GM12878 (cell line): ENCODE measurements at regions of chr10 and their contacts with region 1.

Region 1: DNA sequence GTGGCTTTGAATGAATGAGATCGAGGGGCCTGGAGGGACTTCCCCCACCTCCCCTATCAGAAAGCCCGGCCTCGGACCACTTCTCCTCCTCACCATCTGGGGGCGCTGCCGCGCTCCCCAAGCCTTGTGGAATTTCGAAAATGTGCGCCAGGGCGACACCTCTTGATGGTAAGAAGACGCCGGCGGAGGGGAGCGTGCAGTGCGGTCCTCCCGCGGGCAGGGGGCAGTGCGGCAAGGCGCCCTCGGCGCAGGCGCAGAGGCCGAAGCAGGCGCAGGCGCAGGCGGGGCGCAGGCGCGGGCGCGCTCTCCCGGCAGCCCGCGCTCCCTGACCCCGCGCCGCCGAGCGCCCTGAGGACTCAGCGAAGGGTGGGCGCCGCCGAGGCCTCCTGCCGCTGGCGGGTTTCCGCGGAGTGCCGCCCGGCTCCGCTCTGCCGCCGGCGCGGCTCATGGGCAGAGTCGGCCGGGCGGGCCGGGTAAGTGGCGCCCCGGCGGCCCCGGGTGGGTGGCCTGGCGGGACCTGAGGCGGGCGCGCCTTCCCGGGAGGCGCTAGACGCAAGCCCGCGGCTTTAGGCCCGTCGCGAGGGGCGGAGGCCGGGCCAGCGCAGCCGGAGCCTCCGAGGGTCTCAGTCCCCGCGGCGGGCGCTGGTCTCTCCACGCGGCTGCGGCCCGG is at the start of gene RBM17:
- DNase-seq: peak; percentile 82
- ATAC-seq: peak; percentile 88
- H3K4me3 ChIP-seq: peak within 1 kb of the TSS; percentile 99
- H3K27ac ChIP-seq: peak within 1 kb of the TSS; percentile 81
- H3K4me1 ChIP-seq: peaks cover 3% of the 10 kb centered on the region; the same call in 1 of the 2 replicates
- H3K27me3 ChIP-seq: no peaks in the 10 kb centered on the region
- CTCF ChIP-seq: peak; percentile 100; a peak in 5 of 6 replicates
- EP300 ChIP-seq: no peak; a peak in 1 of 4 replicates
- POLR2A ChIP-seq: peak; percentile 85
- RAD21 ChIP-seq: peak; percentile 95
- polyA plus RNA-seq, gene RBM17: 28.4 to 45.0 TPM

Region 2: DNA sequence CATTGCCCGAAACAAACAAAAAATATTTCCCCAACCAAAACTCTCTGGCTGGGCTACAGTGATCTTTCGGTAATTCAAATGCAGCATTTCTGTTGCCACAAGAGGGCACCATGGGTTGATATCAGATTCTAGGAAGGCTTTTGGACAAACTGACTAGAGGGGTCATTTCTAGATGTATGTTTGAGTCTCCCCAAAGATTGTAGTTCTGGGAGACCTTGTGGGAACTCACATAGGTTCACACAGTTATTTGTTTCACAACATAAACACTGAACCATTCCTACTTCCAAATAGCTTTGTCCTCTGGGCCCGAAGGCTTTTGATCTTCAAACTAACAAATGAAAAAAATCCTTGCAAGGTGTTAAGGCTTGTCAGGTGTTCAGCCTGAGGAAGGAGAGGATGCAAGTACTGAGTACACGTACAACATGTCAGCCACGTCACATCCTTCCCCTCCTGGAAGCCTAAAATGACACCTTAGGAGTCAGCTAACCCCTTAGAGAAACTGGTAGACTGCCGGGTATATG is 74.6 kb before region 1 on chr10:
- CTCF ChIA-PET with region 1: interaction called, 142 read pairs
- POLR2A ChIA-PET with region 1: interaction called, 4 read pairs
- RAD21 ChIA-PET with region 1: interaction called, 45 read pairs
- SMC1A ChIA-PET with region 1: interaction called, 81 read pairs
- in situ Hi-C with region 1: loop called (anchors 5 kb)
- intact Hi-C with region 1: loop called (anchors 1 kb)
- DNase-seq: peak; percentile 30
- ATAC-seq: peak; percentile 91
- H3K4me3 ChIP-seq: no peak overlapping the region
- H3K27ac ChIP-seq: no peak overlapping the region
- H3K4me1 ChIP-seq: no peaks in the 10 kb centered on the region
- H3K27me3 ChIP-seq: no peaks in the 10 kb centered on the region; a peak in 1 of 4 replicates
- CTCF ChIP-seq: peak; percentile 68 to 82 (median 77)
- EP300 ChIP-seq: no peak
- POLR2A ChIP-seq: no peak
- RAD21 ChIP-seq: peak; percentile 89

Region 3: DNA sequence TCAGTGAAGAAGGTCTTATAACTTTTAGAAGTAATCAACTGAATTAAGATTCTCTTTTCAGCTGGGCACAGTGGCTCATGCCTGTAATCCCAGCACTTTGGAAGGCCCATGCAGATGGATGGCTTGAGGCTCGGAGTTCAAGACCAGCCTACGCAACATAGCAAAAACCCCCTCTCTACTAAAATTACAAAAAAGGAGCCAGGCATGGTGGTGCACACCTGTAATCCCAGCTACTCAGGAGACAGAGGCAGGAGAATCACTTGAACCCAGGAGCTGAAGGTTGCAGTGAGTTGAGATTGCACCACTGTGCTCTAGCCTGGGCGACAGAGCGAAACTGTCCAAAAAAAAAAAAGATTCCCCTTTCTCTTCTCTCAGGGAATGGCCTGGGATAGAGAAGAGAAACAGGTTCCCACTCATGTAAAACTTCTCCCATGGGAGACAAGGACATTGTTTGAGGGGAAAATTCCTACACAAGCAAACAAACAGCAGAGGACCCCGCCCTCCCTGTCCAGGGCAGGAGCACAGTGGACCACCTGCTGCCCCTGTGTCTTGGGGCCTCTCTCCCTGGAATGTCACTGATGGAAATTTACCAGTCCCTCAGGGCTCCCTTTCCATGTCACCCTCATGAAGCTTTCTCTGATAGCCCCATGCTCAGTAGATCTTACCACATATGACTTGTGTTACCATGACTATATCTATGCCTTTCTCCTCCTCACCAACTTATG is 32.3 kb before region 1 on chr10:
- CTCF ChIA-PET with region 1: interaction called, 95 read pairs
- POLR2A ChIA-PET with region 1: interaction called, 8 read pairs
- RAD21 ChIA-PET with region 1: interaction called, 21 read pairs
- SMC1A ChIA-PET with region 1: interaction called, 61 read pairs
- in situ Hi-C with region 1: no loop called
- intact Hi-C with region 1: loop called (anchors 1 kb)
- DNase-seq: no peak
- ATAC-seq: no peak
- H3K4me3 ChIP-seq: no peak overlapping the region
- H3K27ac ChIP-seq: no peak overlapping the region
- H3K4me1 ChIP-seq: peaks cover 57% of the 10 kb centered on the region
- H3K27me3 ChIP-seq: no peaks in the 10 kb centered on the region
- CTCF ChIP-seq: no peak
- EP300 ChIP-seq: no peak
- POLR2A ChIP-seq: no peak
- RAD21 ChIP-seq: no peak

Region 4: DNA sequence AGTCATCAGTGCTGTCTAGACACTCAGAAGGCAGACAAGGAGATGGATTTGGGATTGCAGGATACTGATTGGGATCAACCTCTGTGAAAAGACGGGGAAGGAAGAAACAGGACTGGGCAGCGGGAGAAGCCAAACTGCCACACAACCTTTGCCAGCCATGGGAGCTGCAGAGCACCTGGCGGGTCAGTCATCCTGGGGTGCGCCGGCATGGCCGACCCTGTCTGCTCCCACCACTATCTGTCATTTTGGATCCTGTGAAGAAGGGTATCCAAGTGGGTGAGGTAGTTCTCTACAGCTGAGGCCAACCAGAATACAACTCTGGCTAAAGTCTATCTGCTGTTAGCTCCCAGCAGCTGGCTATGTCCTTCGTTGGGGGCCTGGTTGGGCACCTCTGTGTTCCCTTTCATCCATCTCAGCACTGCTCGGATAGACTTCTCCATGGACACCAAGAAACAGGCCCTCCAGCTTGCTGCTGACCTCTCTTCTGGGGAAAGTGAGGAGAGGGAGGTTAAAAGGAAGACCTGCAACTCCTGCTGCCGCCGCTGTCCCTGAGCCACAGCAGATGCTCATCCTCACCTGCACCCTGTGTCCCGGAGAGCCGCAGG is 11.7 kb before region 1 on chr10:
- CTCF ChIA-PET with region 1: interaction called, 53 read pairs
- POLR2A ChIA-PET with region 1: interaction called, 3 read pairs
- RAD21 ChIA-PET with region 1: interaction called, 5 read pairs
- SMC1A ChIA-PET with region 1: interaction called, 14 read pairs
- in situ Hi-C with region 1: no loop called
- intact Hi-C with region 1: no loop called
- DNase-seq: no peak
- ATAC-seq: no peak
- H3K4me3 ChIP-seq: no peak overlapping the region
- H3K27ac ChIP-seq: no peak overlapping the region
- H3K4me1 ChIP-seq: peaks cover under 1% of the 10 kb centered on the region
- H3K27me3 ChIP-seq: no peaks in the 10 kb centered on the region; a peak in 1 of 4 replicates
- CTCF ChIP-seq: no peak
- EP300 ChIP-seq: no peak
- POLR2A ChIP-seq: no peak
- RAD21 ChIP-seq: no peak

Region 5: GRCh38 chr10:6151087-6151977 is 62.5 kb after region 1 on chr10:
- CTCF ChIA-PET with region 1: interaction called, 31 read pairs
- POLR2A ChIA-PET with region 1: no interaction called
- RAD21 ChIA-PET with region 1: interaction called, 5 read pairs
- SMC1A ChIA-PET with region 1: interaction called, 6 read pairs
- in situ Hi-C with region 1: no loop called
- intact Hi-C with region 1: no loop called
- DNase-seq: peak; percentile 51
- ATAC-seq: peak; percentile 86
- H3K4me3 ChIP-seq: peak overlapping the region; percentile 9
- H3K27ac ChIP-seq: peak overlapping the region; percentile 8; the same call in 1 of the 2 replicates
- H3K4me1 ChIP-seq: peaks cover 25% of the 10 kb centered on the region
- H3K27me3 ChIP-seq: no peaks in the 10 kb centered on the region
- CTCF ChIP-seq: peak; percentile 71 to 82 (median 81)
- EP300 ChIP-seq: no peak
- POLR2A ChIP-seq: no peak
- RAD21 ChIP-seq: peak; percentile 61

Region 6: GRCh38 chr10:6563075-6563474 is 474.2 kb after region 1 on chr10:
- CTCF ChIA-PET with region 1: no interaction called
- POLR2A ChIA-PET with region 1: no interaction called
- RAD21 ChIA-PET with region 1: no interaction called
- SMC1A ChIA-PET with region 1: no interaction called
- in situ Hi-C with region 1: no loop called
- intact Hi-C with region 1: no loop called
- DNase-seq: no peak
- ATAC-seq: peak; percentile 65
- H3K4me3 ChIP-seq: no peak overlapping the region
- H3K27ac ChIP-seq: no peak overlapping the region
- H3K4me1 ChIP-seq: no peaks in the 10 kb centered on the region
- H3K27me3 ChIP-seq: peaks cover 0 to 6% of the 10 kb centered on the region in 2 experiments; a peak in 3 of 4 replicates
- CTCF ChIP-seq: no peak
- EP300 ChIP-seq: no peak
- POLR2A ChIP-seq: no peak
- RAD21 ChIP-seq: no peak